ENCODE measurements at regions of chr6 and their contacts with region 1.

Region 1: DNA sequence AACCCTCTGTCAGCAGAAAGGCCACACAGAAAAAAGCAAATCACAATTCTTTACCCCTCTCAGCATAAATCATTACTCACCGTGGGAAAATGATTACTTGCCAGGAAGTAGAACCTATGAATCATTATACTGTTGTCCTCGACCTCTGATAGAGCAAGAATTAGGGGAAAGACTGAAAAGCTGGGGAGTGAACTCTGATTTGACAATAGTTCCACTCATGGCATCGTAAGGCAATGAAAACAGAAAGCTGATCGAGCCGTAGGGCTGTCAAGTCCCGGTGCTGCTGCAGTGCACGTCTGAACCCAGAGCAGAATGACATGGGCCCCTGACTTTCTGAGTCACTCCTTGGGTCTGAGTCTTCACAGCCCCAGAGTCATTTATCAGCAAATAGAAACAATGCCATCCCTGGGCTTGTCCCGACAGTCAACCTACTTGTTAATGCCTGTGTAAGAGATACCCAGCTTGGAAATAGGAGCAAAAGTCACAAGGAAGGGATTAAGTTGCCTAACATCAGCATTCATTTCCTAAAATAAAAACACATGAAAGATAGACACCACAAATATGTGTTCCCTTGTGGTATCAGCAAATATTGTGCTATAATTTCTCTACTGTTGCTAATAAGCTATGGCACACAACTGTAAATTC is 224.8 kb upstream of the MARCKS start:
- DNase-seq: peak; percentile 61
- H3K4me3 Mint-ChIP-seq: peak overlapping the region; percentile 55
- H3K27ac Mint-ChIP-seq: peak overlapping the region; percentile 97
- H3K4me1 Mint-ChIP-seq: peaks cover 57% of the 10 kb centered on the region
- H3K27me3 Mint-ChIP-seq: no peaks in the 10 kb centered on the region
- CTCF ChIP-seq: no peak

Region 2: DNA sequence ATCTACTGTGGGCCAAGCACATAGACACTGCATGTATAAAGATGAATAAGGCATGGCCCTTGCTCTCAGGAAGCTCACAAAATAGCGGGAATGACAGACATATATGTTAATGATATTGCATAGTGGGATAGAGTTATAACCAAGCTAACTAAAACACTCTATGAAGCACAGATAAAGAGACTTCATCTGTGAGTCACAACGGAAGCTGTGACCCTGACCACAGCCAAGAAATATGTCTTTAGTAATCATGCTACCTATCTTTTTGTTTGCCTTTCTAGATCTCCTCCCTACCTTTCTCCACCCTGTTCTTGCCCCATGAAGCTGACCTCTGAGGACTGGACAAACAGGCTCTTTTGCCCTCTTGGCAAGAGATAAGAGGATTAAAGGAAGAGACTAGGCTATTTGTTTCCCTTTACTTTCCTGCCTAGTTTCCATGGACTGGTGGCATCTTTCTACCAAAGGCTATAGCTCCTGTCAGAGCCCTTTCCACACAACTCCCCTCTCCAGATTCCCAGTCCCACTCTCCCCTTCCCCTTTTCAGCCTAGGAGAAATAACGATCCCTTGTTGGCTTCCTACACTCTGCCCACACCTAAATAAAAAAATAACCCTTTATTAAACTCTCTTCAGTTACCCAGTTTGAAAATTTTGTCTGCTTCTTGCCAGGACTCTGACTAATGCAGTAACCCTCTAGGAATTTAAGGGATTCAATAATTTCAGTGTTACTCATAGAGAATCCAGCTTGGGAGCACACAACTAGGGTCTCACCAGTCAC is 280.1 kb before region 1 on chr6:
- CTCF ChIA-PET with region 1: no interaction called
- intact Hi-C with region 1: loop called (anchors 5 kb)
- DNase-seq: peak; percentile 62
- H3K4me3 Mint-ChIP-seq: peak overlapping the region; percentile 12
- H3K27ac Mint-ChIP-seq: peak overlapping the region; percentile 46
- H3K4me1 Mint-ChIP-seq: peaks cover 63% of the 10 kb centered on the region
- H3K27me3 Mint-ChIP-seq: no peaks in the 10 kb centered on the region
- CTCF ChIP-seq: no peak

Region 3: DNA sequence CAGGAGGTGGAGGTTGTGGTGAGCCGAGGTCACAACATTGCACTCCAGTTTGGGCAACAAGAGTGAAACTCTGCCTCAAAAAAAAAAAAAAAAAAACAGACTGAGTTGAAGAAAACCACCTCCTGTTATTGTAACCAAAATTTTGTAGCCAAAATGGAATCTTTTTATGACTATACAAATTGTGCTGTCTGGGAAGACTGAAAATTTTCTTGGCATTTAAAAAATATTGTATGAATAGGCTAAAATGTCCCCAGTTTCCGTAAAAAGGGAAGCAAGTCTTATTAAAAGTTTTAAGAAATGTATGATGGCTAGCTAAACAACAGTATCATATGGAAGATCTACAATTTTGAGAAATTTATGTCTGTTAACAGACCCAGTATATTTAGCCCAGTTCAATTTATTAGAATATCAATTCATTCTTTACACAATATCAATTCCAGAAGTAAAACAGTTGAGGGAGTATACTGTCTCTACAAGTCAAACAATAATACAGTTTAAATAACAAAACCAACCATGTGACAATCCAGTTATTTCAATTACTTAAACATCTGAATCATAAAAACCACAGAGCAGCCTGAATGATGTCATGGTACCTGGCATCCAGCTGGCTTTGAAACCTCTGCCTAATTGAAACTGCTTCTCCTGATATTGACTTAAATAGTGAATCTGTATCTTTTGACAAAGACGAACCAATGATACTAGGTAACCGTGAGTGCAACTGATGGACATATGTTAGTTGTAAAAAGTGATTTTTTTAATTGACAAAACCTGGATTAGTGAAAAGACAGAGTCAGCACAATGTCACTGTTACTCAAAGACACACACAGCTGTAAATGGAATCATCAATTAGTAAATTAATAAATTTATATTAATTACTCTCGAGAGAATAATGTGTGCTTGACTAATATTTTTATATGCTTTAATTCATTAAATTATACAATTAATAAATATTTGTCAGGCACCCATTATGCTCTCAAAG is 58.2 kb after region 1 on chr6:
- CTCF ChIA-PET with region 1: no interaction called
- intact Hi-C with region 1: no loop called
- DNase-seq: peak; percentile 43
- H3K4me3 Mint-ChIP-seq: no peak overlapping the region
- H3K27ac Mint-ChIP-seq: peak overlapping the region; percentile 74
- H3K4me1 Mint-ChIP-seq: peaks cover 31% of the 10 kb centered on the region
- H3K27me3 Mint-ChIP-seq: no peaks in the 10 kb centered on the region
- CTCF ChIP-seq: no peak

Region 4: GRCh38 chr6:113782636-113783035 is 150.3 kb after region 1 on chr6:
- CTCF ChIA-PET with region 1: interaction called, 9 read pairs
- intact Hi-C with region 1: loop called (anchors 10 kb)
- DNase-seq: no peak
- H3K4me3 Mint-ChIP-seq: no peak overlapping the region
- H3K27ac Mint-ChIP-seq: no peak overlapping the region
- H3K4me1 Mint-ChIP-seq: no peaks in the 10 kb centered on the region
- H3K27me3 Mint-ChIP-seq: no peaks in the 10 kb centered on the region
- CTCF ChIP-seq: no peak

Measured in Calu3 (cell line).